IMR-90 (cell line): ENCODE measurements at regions of chr12 and their contacts with region 1.

Region 1: GRCh38 chr12:23618718-23619117 is 330.8 kb downstream of the SOX5 start:
- DNase-seq: no peak
- ATAC-seq: no peak
- H3K4me3 ChIP-seq: no peak overlapping the region
- H3K27ac ChIP-seq: no peak overlapping the region
- H3K4me1 ChIP-seq: no peaks in the 10 kb centered on the region
- H3K27me3 ChIP-seq: no peaks in the 10 kb centered on the region
- CTCF ChIP-seq: no peak
- POLR2A ChIP-seq: no peak
- RAD21 ChIP-seq: no peak

Region 2: GRCh38 chr12:23464241-23464812 is 154.4 kb before region 1 on chr12:
- CTCF ChIA-PET with region 1: no interaction called
- POLR2A ChIA-PET with region 1: interaction called, 14 read pairs
- dilution Hi-C with region 1: no loop called
- in situ Hi-C with region 1: no loop called
- intact Hi-C with region 1: no loop called
- DNase-seq: no peak
- ATAC-seq: no peak
- H3K4me3 ChIP-seq: no peak overlapping the region
- H3K27ac ChIP-seq: no peak overlapping the region
- H3K4me1 ChIP-seq: no peaks in the 10 kb centered on the region
- H3K27me3 ChIP-seq: no peaks in the 10 kb centered on the region
- CTCF ChIP-seq: no peak
- POLR2A ChIP-seq: no peak
- RAD21 ChIP-seq: no peak

Region 3: GRCh38 chr12:23540572-23540971 is 78.1 kb before region 1 on chr12:
- CTCF ChIA-PET with region 1: no interaction called
- POLR2A ChIA-PET with region 1: no interaction called
- dilution Hi-C with region 1: no loop called
- in situ Hi-C with region 1: no loop called
- intact Hi-C with region 1: no loop called
- DNase-seq: no peak
- ATAC-seq: no peak
- H3K4me3 ChIP-seq: no peak overlapping the region
- H3K27ac ChIP-seq: no peak overlapping the region
- H3K4me1 ChIP-seq: no peaks in the 10 kb centered on the region
- H3K27me3 ChIP-seq: no peaks in the 10 kb centered on the region
- CTCF ChIP-seq: no peak
- POLR2A ChIP-seq: no peak
- RAD21 ChIP-seq: no peak

Region 4: DNA sequence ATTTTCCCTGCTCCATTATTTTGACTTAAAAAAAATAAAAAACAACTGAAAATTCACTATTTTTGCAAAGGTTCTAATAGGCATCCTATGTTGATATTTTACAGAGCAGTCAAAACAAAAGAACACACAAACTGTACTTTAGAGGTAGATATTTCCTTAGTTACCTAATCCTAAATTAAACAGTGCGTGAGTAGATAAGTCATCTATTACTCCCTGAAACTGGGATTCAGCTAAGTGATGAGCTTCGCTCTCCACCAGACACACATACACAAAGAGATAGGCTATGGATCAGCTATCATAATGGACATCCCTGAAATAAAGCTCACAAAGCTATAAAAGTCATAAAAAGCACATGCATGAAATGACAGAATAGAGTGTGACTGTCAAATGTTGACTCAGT is 68.0 kb before region 1 on chr12:
- CTCF ChIA-PET with region 1: no interaction called
- POLR2A ChIA-PET with region 1: no interaction called
- dilution Hi-C with region 1: no loop called
- in situ Hi-C with region 1: no loop called
- intact Hi-C with region 1: loop called (anchors 5 kb)
- DNase-seq: no peak
- ATAC-seq: no peak
- H3K4me3 ChIP-seq: no peak overlapping the region
- H3K27ac ChIP-seq: no peak overlapping the region
- H3K4me1 ChIP-seq: no peaks in the 10 kb centered on the region
- H3K27me3 ChIP-seq: no peaks in the 10 kb centered on the region
- CTCF ChIP-seq: no peak
- POLR2A ChIP-seq: no peak
- RAD21 ChIP-seq: no peak

Region 5: DNA sequence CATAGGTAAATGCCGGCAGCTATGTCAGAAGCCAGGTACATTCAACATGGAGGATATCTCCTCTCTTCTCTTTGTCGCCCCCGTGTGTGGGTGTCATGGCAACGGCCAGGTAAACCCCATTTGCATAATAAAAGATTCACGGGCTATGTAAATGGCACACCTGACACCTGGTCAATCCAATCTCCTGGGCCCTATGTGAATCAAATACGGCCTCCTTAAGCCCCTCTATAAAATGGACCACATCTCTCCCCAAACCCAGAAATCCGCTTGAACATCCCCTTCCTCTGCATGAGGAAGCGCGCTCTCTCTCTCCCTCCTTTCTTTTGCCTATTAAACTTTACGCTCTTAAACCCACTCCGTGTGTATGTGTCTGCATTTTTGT is 32.9 kb before region 1 on chr12:
- CTCF ChIA-PET with region 1: no interaction called
- POLR2A ChIA-PET with region 1: no interaction called
- dilution Hi-C with region 1: no loop called
- in situ Hi-C with region 1: no loop called
- intact Hi-C with region 1: no loop called
- DNase-seq: no peak
- ATAC-seq: no peak
- H3K4me3 ChIP-seq: no peak overlapping the region
- H3K27ac ChIP-seq: no peak overlapping the region
- H3K4me1 ChIP-seq: no peaks in the 10 kb centered on the region
- H3K27me3 ChIP-seq: no peaks in the 10 kb centered on the region
- CTCF ChIP-seq: no peak
- POLR2A ChIP-seq: no peak
- RAD21 ChIP-seq: no peak